Mammary epithelial cell (primary cell): ENCODE measurements at regions of chr13 and their contacts with region 1.

Region 1: DNA sequence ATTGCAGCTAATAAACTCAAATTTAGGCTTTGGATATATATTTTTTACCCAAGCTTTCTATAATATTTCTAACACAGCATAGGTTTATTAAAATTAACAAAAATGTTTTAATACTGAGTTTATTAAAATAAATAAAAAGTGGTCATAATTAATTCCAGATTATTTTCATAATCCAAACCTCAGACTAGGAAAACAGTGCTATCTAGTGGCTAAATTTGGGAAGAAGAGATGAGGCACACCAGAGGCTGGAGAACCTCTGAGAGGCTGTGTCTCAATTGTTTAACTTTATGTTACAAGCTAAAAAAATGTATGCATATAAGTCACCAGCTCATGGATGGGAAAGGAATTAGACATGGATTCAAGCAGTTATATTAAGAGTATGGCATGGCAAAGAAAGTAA is 392.5 kb downstream of the DIAPH3 start:
- DNase-seq: no peak
- H3K4me3 ChIP-seq: no peak overlapping the region
- H3K27ac ChIP-seq: no peak overlapping the region
- H3K4me1 ChIP-seq: peaks cover 30% of the 10 kb centered on the region
- H3K27me3 ChIP-seq: no peaks in the 10 kb centered on the region
- CTCF ChIP-seq: peak; percentile 68 to 69

Region 2: DNA sequence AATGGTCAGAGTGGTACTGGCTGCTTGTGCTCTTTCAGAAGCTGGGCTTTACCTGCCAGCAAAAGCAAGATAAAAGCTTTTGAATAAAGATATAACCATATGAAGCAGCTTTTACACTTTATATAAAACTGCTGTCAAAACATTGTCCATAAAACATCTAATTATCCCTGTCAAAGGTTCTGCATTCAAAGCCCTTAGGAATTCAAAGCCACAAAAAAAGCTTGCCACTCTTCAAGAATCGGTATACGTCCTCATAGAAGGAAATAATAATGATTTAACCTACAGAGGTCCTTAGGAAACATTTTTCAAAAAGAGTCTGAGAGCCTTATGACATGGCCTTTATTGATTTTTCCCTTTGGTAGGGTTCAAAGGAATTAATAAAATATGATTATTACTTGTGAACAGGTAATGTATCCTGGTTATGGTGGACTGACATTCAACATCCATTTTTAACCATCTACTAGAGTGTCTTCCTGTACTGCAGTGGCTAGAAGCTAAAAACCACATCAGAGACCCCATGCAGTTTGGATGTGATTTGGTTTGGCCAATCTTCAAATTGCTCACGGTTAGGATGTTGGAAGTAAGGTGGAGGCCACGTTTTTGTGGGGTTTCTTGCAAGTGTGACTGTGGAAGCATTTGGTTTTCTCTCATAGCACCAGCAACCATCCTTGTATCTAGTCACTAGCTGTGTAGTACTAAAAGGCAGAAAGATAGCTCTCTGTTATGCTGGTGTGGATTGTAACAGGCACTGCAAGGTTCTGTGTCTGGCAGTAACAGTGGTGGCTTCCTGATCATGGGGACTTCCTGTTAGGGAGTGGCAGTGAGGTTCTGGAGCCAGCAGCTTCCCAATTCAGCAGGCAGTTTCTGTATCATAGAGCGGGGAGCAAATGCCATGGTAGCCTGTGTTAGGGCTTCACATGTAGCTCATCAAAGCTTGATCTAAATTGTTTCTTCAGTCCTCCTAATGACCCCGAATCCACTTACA is 49.1 kb before region 1 on chr13:
- CTCF ChIA-PET with region 1: no interaction called
- dilution Hi-C with region 1: no loop called
- in situ Hi-C with region 1: no loop called
- intact Hi-C with region 1: no loop called
- DNase-seq: no peak
- H3K4me3 ChIP-seq: no peak overlapping the region
- H3K27ac ChIP-seq: no peak overlapping the region
- H3K4me1 ChIP-seq: no peaks in the 10 kb centered on the region
- H3K27me3 ChIP-seq: no peaks in the 10 kb centered on the region
- CTCF ChIP-seq: no peak

Region 3: GRCh38 chr13:59846843-59847620 is 75.8 kb after region 1 on chr13:
- CTCF ChIA-PET with region 1: interaction called, 10 read pairs
- dilution Hi-C with region 1: no loop called
- in situ Hi-C with region 1: no loop called
- intact Hi-C with region 1: no loop called
- DNase-seq: no peak
- H3K4me3 ChIP-seq: no peak overlapping the region
- H3K27ac ChIP-seq: no peak overlapping the region
- H3K4me1 ChIP-seq: no peaks in the 10 kb centered on the region
- H3K27me3 ChIP-seq: no peaks in the 10 kb centered on the region
- CTCF ChIP-seq: peak in 1 of 2 donors; percentile 24

Region 4: DNA sequence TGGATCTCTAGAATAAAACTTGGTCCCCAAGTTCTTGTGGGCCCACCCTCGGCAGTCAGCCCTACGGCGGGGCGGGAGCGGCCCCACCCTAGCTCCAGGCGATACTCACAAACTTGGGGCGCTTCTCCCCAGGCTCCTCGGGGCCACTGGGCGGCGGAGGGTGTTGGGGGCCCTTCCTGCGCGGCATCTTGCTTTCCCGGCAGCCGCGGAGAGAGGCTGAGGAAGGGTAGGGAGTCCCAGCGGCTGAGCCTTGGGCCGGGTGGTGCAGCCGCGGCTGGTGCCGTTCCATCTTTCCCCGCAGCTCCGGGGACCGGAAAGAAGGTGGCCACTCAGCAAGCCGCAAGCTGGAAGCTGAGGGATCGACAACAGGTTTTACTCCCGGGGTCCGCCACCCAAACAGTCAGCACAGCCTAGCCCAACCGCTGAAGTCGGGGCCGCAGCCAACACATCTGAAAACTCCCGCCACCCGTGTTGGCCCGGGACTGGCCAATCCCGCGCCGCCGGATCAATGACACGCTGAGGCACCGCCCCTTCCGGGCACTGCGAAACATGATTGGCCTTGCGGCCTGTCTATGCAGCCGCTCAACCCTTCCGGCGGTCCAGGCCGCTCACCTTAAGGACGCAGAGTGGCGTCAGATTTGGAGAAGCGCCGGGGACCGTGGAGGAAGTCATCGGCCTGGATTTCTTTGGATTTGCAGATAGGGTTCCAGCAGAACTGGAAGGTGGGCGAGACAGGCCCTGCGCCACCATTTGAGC is 392.4 kb after region 1 on chr13 and contains the start of gene DIAPH3:
- CTCF ChIA-PET with region 1: no interaction called
- dilution Hi-C with region 1: no loop called
- in situ Hi-C with region 1: no loop called
- intact Hi-C with region 1: loop called (anchors 5 kb)
- DNase-seq: peak; percentile 94
- H3K4me3 ChIP-seq: peak within 1 kb of the TSS; percentile 72 to 87 (median 82)
- H3K27ac ChIP-seq: peak within 1 kb of the TSS; percentile 92
- H3K4me1 ChIP-seq: peaks cover 11% of the 10 kb centered on the region
- H3K27me3 ChIP-seq: no peaks in the 10 kb centered on the region
- CTCF ChIP-seq: no peak
- total RNA-seq, gene DIAPH3: 8.0 to 25.0 TPM

Region 5: DNA sequence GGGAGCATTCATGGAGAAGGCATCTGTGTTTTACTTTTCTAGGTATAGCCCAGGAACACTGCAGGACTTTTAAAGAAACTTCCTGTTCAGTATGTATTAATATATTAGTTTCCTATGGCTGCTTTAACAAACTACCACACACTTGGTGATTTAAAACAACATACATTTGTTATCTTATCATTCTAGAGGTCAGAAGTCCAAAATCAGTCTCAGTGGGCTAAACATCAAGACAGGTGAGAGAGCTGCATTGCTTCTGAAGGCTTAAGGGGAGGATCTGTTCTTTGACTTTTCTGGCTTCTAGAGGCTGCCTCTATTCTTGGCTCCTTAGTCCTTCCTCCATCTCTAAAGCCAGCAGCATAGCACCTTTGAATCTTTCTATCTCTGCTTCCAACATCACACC is 430.0 kb after region 1 on chr13:
- CTCF ChIA-PET with region 1: no interaction called
- dilution Hi-C with region 1: no loop called
- in situ Hi-C with region 1: no loop called
- intact Hi-C with region 1: no loop called
- DNase-seq: no peak
- H3K4me3 ChIP-seq: no peak overlapping the region
- H3K27ac ChIP-seq: no peak overlapping the region
- H3K4me1 ChIP-seq: no peaks in the 10 kb centered on the region
- H3K27me3 ChIP-seq: no peaks in the 10 kb centered on the region
- CTCF ChIP-seq: no peak